ENCODE measurements at regions of chr5 and their contacts with region 1.

Region 1: GRCh38 chr5:149834246-149834855 is 104.2 kb downstream of the PPARGC1B start:
- DNase-seq: peak; percentile 72 to 77
- H3K4me3 ChIP-seq: no peak overlapping the region
- H3K4me3 Mint-ChIP-seq: no peak overlapping the region
- H3K27ac Mint-ChIP-seq: no peak overlapping the region
- H3K4me1 ChIP-seq: no peaks in the 10 kb centered on the region
- H3K4me1 Mint-ChIP-seq: no peaks in the 10 kb centered on the region
- H3K27me3 ChIP-seq: no peaks in the 10 kb centered on the region
- H3K27me3 Mint-ChIP-seq: no peaks in the 10 kb centered on the region
- CTCF ChIP-seq: peak; percentile 73 to 84

Region 2: GRCh38 chr5:148314204-148314603 is 1520.1 kb before region 1 on chr5:
- CTCF ChIA-PET with region 1: no interaction called
- POLR2A ChIA-PET with region 1: no interaction called
- intact Hi-C with region 1: no loop called
- DNase-seq: no peak
- H3K4me3 ChIP-seq: no peak overlapping the region
- H3K4me3 Mint-ChIP-seq: no peak overlapping the region
- H3K27ac Mint-ChIP-seq: no peak overlapping the region
- H3K4me1 ChIP-seq: no peaks in the 10 kb centered on the region
- H3K4me1 Mint-ChIP-seq: no peaks in the 10 kb centered on the region
- H3K27me3 ChIP-seq: no peaks in the 10 kb centered on the region
- H3K27me3 Mint-ChIP-seq: peaks cover 3% of the 10 kb centered on the region
- CTCF ChIP-seq: no peak

Region 3: DNA sequence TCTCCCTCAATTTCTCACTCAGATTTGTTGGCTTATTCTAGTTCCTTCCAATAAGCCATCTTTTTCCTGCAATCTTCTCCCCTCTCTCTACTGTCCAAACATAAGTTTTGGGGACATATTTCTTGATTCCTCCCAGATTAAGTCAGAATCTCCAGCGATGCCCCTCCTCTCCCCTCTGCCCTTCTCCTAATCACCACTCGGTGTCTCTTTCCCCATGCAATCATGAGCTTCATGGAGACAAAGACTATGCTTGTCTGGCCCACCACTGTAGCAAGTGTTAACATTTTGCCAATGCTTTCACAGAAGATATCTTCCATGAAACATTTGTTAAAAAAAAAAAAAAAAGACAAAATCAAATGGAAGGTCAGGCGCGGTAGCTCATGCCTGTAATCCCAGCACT is 67.8 kb after region 1 on chr5:
- CTCF ChIA-PET with region 1: interaction called, 7 read pairs
- POLR2A ChIA-PET with region 1: no interaction called
- intact Hi-C with region 1: loop called (anchors 5 kb)
- DNase-seq: peak; percentile 43 to 48
- H3K4me3 ChIP-seq: no peak overlapping the region
- H3K4me3 Mint-ChIP-seq: no peak overlapping the region
- H3K27ac Mint-ChIP-seq: peak overlapping the region; percentile 36
- H3K4me1 ChIP-seq: peaks cover 11% of the 10 kb centered on the region
- H3K4me1 Mint-ChIP-seq: peaks cover 20% of the 10 kb centered on the region
- H3K27me3 ChIP-seq: no peaks in the 10 kb centered on the region
- H3K27me3 Mint-ChIP-seq: no peaks in the 10 kb centered on the region
- CTCF ChIP-seq: peak; percentile 46 to 62

Region 4: DNA sequence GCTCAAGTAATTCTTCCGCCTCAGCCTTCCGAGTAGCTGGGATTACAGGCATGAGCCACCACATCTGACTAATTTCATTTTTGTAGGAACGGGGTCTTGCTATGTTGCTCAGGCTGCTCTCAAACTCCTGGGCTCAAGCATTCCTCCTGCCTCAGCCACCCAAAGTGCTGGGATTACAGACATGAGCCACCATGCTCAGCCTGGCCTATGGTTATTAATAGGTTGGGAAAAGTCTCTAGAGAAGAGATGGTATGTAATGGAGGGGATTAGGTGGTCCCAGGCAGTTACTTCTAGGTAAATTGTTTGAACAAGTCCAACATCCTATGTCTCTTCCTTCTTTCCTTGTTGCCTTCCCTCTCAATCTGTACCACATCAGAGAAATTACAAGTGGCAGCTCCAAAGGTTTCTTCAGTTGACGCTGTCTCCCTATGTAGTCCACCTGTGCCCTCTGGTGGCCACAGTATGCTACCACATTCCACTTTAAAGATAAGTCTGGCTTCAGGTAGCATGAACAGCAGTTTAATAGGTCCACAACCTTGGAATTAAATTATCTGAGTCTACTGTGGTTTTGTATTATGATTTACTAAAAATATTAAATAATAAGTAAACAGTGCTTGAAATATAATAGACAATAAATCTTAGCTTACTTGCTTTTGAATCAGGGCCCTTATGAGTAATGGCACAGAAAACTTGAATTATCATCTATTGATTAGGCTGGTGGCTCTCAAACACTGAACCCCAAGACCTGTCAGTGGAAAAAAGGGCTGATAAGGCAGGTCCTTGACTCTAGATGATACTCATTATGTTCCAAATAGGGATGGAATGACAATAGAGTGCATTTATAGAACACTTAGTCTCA is 156.4 kb after region 1 on chr5:
- CTCF ChIA-PET with region 1: interaction called, 62 read pairs
- POLR2A ChIA-PET with region 1: no interaction called
- intact Hi-C with region 1: loop called (anchors 1 kb)
- DNase-seq: peak; percentile 77 to 80
- H3K4me3 ChIP-seq: no peak overlapping the region
- H3K4me3 Mint-ChIP-seq: no peak overlapping the region
- H3K27ac Mint-ChIP-seq: no peak overlapping the region
- H3K4me1 ChIP-seq: peaks cover 22% of the 10 kb centered on the region
- H3K4me1 Mint-ChIP-seq: peaks cover 21% of the 10 kb centered on the region
- H3K27me3 ChIP-seq: no peaks in the 10 kb centered on the region
- H3K27me3 Mint-ChIP-seq: no peaks in the 10 kb centered on the region
- CTCF ChIP-seq: peak; percentile 94 to 95

Region 5: GRCh38 chr5:150129813-150130492 is 295.6 kb after region 1 on chr5:
- CTCF ChIA-PET with region 1: no interaction called
- POLR2A ChIA-PET with region 1: no interaction called
- intact Hi-C with region 1: loop called (anchors 10 kb)
- DNase-seq: peak; percentile 80 to 86
- H3K4me3 ChIP-seq: no peak overlapping the region
- H3K4me3 Mint-ChIP-seq: no peak overlapping the region
- H3K27ac Mint-ChIP-seq: no peak overlapping the region
- H3K4me1 ChIP-seq: peaks cover 10% of the 10 kb centered on the region
- H3K4me1 Mint-ChIP-seq: peaks cover 9% of the 10 kb centered on the region
- H3K27me3 ChIP-seq: no peaks in the 10 kb centered on the region
- H3K27me3 Mint-ChIP-seq: no peaks in the 10 kb centered on the region
- CTCF ChIP-seq: peak; percentile 95 to 96

Region 6: DNA sequence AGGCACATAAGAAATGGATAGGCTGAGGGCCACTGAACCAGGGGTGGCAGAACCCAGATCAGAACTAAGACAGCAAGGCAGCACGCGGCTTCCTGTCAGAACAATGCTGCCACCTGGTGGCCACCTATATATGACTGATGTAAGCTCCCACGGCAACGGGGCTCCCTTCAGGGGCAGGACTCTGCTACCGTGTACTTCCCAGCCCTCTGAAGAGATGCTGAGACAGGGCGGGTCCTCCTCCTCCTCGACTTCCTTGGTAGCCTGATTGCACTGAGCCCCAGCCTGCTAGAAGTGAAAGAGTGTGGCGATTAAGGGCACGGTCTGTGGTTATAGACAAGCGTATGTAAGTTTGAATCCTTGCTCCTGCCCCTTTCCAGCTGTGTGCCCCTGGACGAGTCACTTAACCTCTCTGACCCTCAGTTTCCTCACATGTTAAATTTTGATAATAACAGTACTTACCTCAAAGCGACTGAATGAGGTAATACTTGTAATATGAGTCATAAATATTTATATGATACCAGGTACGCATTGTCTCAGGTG is 601.9 kb after region 1 on chr5:
- CTCF ChIA-PET with region 1: no interaction called
- POLR2A ChIA-PET with region 1: no interaction called
- intact Hi-C with region 1: loop called (anchors 2 kb)
- DNase-seq: peak; percentile 89 to 92
- H3K4me3 ChIP-seq: no peak overlapping the region
- H3K4me3 Mint-ChIP-seq: no peak overlapping the region
- H3K27ac Mint-ChIP-seq: no peak overlapping the region
- H3K4me1 ChIP-seq: no peaks in the 10 kb centered on the region
- H3K4me1 Mint-ChIP-seq: no peaks in the 10 kb centered on the region
- H3K27me3 ChIP-seq: no peaks in the 10 kb centered on the region
- H3K27me3 Mint-ChIP-seq: no peaks in the 10 kb centered on the region
- CTCF ChIP-seq: peak; percentile 88 to 90